HCT116 (cell line): ENCODE measurements at regions of chr12 and their contacts with region 1.

Region 1: GRCh38 chr12:71746983-71747611 is 7.6 kb upstream of the RAB21 start:
- DNase-seq: peak; percentile 49
- ATAC-seq: peak; percentile 90
- H3K4me3 ChIP-seq: no peak overlapping the region
- H3K27ac ChIP-seq: no peak overlapping the region
- H3K4me1 ChIP-seq: no peaks in the 10 kb centered on the region
- H3K27me3 ChIP-seq: peaks cover 7% of the 10 kb centered on the region; the same call in 1 of the 2 replicates
- CTCF ChIP-seq: peak; percentile 59 to 81 (median 76)
- POLR2A ChIP-seq: no peak
- RAD21 ChIP-seq: peak; percentile 93

Region 2: DNA sequence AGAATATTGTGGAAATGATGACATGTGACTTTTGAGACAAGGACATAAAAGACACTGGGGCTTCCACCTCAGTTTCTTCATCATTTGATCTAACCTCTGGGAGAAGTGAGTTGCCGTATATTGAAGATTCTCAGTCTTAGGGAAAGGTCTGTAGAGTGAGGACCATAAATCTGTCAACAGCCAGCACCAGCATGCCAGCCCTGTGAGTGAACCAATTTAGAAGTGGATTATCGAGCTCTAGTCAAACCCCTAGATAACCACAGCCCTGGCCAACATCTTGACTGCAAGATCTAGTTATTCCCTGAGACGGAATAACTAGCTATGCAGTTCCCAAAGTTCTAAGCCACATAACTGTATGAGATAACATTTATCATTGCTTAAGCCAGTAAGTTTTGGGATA is 717.8 kb before region 1 on chr12:
- CTCF ChIA-PET with region 1: no interaction called
- POLR2A ChIA-PET with region 1: no interaction called
- RAD21 ChIA-PET with region 1: no interaction called
- intact Hi-C with region 1: loop called (anchors 10 kb)
- DNase-seq: no peak
- ATAC-seq: no peak
- H3K4me3 ChIP-seq: no peak overlapping the region
- H3K27ac ChIP-seq: no peak overlapping the region
- H3K4me1 ChIP-seq: no peaks in the 10 kb centered on the region
- H3K27me3 ChIP-seq: no peaks in the 10 kb centered on the region
- CTCF ChIP-seq: no peak
- POLR2A ChIP-seq: no peak
- RAD21 ChIP-seq: no peak

Region 3: GRCh38 chr12:71392521-71393145 is 354.5 kb before region 1 on chr12:
- CTCF ChIA-PET with region 1: interaction called, 10 read pairs
- POLR2A ChIA-PET with region 1: no interaction called
- RAD21 ChIA-PET with region 1: no interaction called
- intact Hi-C with region 1: no loop called
- DNase-seq: peak; percentile 72
- ATAC-seq: peak; percentile 98
- H3K4me3 ChIP-seq: no peak overlapping the region
- H3K27ac ChIP-seq: no peak overlapping the region
- H3K4me1 ChIP-seq: peaks cover 0 to 9% of the 10 kb centered on the region in 2 experiments; a peak in 2 of 4 replicates
- H3K27me3 ChIP-seq: no peaks in the 10 kb centered on the region
- CTCF ChIP-seq: peak; percentile 56 to 80 (median 77); a peak in 5 of 6 replicates
- POLR2A ChIP-seq: no peak
- RAD21 ChIP-seq: peak; percentile 70

Region 4: DNA sequence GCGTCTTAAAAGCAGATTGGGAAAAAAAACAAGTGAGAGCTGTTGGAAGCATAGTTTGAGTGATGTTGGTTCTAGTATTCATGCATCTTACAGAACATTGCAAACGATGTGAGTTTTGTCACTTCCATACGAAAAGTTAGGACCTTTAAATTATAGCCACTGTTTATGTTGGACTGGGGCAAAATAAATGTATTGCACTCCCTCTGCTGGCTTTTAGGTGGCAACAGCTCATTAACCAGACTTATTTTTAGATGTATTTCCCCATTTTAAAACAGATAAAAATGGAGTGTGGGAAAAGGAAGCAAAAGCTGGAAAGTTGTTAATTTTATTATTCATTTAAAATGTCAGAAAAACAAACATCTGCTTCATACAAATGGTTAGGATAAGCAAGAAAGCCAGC is 195.6 kb before region 1 on chr12:
- CTCF ChIA-PET with region 1: interaction called, 10 read pairs
- POLR2A ChIA-PET with region 1: no interaction called
- RAD21 ChIA-PET with region 1: interaction called in 1 of 2 experiments, 5 read pairs
- intact Hi-C with region 1: no loop called
- DNase-seq: peak; percentile 7
- ATAC-seq: peak; percentile 60
- H3K4me3 ChIP-seq: no peak overlapping the region
- H3K27ac ChIP-seq: no peak overlapping the region
- H3K4me1 ChIP-seq: peaks cover under 1 to 3% of the 10 kb centered on the region in 2 experiments; a peak in 3 of 4 replicates
- H3K27me3 ChIP-seq: no peaks in the 10 kb centered on the region
- CTCF ChIP-seq: peak; percentile 33 to 61 (median 59); a peak in 5 of 6 replicates
- POLR2A ChIP-seq: no peak
- RAD21 ChIP-seq: peak; percentile 77

Region 5: DNA sequence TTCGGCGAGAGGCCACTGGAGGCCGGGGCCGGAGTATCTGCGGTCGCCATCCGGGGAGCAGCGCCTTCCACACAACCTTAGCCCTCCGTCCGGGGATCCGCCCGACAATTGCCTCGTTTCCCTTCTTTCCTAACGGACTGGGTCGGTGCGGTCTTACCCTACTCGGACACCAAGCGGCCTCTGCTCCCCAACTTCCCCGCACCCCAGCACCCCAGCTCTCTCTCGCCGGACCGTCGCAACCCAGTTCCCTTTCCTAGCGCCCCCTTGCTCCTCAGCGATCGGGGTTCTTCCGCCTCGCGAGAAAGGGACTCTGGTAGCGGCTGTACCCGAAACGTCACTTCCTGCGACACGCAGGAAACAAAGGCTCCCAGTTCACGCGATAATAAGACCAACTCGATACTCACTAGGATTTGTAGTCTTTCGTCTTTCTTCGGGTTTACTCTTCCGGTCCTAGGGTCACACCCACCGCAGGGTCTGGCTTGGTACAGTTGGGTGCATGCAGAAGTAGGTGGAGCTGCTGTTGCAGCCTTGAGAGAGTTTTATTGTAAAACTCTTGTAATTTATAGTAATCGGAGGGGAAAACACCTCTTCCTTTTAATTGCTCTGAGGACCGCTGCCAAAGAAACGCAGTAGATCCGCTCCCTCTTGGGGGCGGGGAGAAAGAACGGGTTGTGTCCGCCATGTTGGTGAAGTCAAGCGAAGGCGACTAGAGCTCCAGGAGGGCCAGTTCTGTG is 83.4 kb before region 1 on chr12 and contains the start of gene ZFC3H1:
- CTCF ChIA-PET with region 1: interaction called, 11 read pairs
- POLR2A ChIA-PET with region 1: interaction called, 7 read pairs
- RAD21 ChIA-PET with region 1: interaction called, 6 read pairs
- intact Hi-C with region 1: loop called (anchors 1 kb)
- DNase-seq: peak; percentile 99
- ATAC-seq: peak; percentile 92
- H3K4me3 ChIP-seq: peak within 1 kb of the TSS; percentile 81 to 97
- H3K27ac ChIP-seq: peak within 1 kb of the TSS; percentile 80
- H3K4me1 ChIP-seq: peaks cover 11 to 18% of the 10 kb centered on the region in 2 experiments
- H3K27me3 ChIP-seq: no peaks in the 10 kb centered on the region
- CTCF ChIP-seq: peak in 2 of 3 experiments; percentile 19 to 29; a peak in 3 of 6 replicates
- POLR2A ChIP-seq: peak; percentile 54
- RAD21 ChIP-seq: no peak
- total RNA-seq, gene ZFC3H1: 37.1 TPM

Region 6: GRCh38 chr12:71731751-71732712 is 15.1 kb before region 1 on chr12:
- CTCF ChIA-PET with region 1: interaction called, 12 read pairs
- POLR2A ChIA-PET with region 1: interaction called, 3 read pairs
- RAD21 ChIA-PET with region 1: no interaction called
- intact Hi-C with region 1: no loop called
- DNase-seq: no peak
- ATAC-seq: peak; percentile 95
- H3K4me3 ChIP-seq: no peak overlapping the region
- H3K27ac ChIP-seq: no peak overlapping the region
- H3K4me1 ChIP-seq: peaks cover 3 to 19% of the 10 kb centered on the region in 2 experiments; a peak in 2 of 4 replicates
- H3K27me3 ChIP-seq: no peaks in the 10 kb centered on the region
- CTCF ChIP-seq: peak in 2 of 3 experiments; percentile 41; a peak in 3 of 6 replicates
- POLR2A ChIP-seq: no peak
- RAD21 ChIP-seq: no peak